ENCODE measurements at regions of chr11 and their contacts with region 1.

Region 1: DNA sequence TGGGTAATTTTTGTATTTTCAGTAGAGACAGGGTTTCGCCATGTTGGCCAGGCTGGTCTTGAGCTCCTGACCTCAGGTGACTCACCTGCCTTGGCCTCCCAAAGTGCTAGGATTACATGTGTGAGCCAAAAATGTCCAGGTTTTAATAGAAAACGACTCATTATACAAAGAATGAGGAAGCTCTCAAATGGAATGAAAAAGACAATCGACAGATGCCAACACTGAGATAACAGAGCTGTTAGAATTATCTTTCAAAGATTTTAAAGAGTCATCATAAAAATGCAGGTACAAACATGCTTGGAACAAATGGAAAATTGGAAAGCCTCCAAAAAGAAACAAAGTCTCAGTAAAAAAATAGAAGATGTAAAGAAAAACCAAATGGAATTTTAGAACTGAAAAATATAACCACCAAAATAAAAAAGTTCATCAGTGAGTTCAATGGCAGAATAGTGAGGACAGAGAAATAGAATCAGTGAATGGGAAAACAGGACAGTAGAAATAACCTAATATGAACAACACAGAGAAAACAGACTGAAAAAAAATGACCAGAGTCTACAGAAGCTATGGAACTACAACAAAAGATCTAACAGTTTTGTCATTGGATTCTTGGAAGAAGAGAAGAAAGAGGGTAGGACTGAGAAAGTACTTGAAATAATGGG is 11.0 kb downstream of the GAB2 start:
- DNase-seq: peak; percentile 65
- ATAC-seq: peak; percentile 46
- H3K4me3 ChIP-seq: no peak overlapping the region
- H3K27ac ChIP-seq: no peak overlapping the region
- H3K4me1 ChIP-seq: peaks cover 8% of the 10 kb centered on the region
- H3K27me3 ChIP-seq: no peaks in the 10 kb centered on the region
- CTCF ChIP-seq: no peak

Region 2: GRCh38 chr11:78370406-78371172 is 36.1 kb before region 1 on chr11:
- CTCF ChIA-PET with region 1: no interaction called
- POLR2A ChIA-PET with region 1: no interaction called
- intact Hi-C with region 1: loop called (anchors 5 kb)
- DNase-seq: no peak
- ATAC-seq: peak; percentile 71
- H3K4me3 ChIP-seq: no peak overlapping the region
- H3K27ac ChIP-seq: no peak overlapping the region
- H3K4me1 ChIP-seq: peaks cover 14% of the 10 kb centered on the region
- H3K27me3 ChIP-seq: no peaks in the 10 kb centered on the region
- CTCF ChIP-seq: no peak

Region 3: GRCh38 chr11:78432058-78432515 is 25.4 kb after region 1 on chr11:
- CTCF ChIA-PET with region 1: no interaction called
- POLR2A ChIA-PET with region 1: no interaction called
- intact Hi-C with region 1: no loop called
- DNase-seq: peak; percentile 37
- ATAC-seq: no peak; the same call in 1 of the 2 replicates
- H3K4me3 ChIP-seq: no peak overlapping the region
- H3K27ac ChIP-seq: no peak overlapping the region
- H3K4me1 ChIP-seq: no peaks in the 10 kb centered on the region
- H3K27me3 ChIP-seq: no peaks in the 10 kb centered on the region
- CTCF ChIP-seq: peak; percentile 67

Region 4: DNA sequence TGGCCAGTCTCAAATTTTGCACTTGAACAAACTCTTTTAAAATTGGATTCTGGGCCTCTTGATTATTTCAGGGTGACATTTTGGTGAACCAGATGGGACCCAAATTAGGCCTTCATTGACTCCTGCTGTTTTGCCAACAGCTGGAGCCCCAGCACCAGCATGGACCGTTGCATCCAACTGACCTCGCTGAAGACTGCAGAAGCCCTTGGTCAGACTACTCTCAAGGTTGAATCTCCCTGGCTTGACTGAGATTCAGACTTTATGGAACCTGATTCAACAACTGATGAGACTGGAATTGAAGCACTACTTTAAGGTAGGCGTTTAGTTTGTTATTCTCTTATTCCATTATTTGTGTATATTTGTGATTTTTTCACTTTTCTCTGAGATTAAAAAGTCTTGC is 126.3 kb after region 1 on chr11:
- CTCF ChIA-PET with region 1: no interaction called
- POLR2A ChIA-PET with region 1: no interaction called
- intact Hi-C with region 1: no loop called
- DNase-seq: no peak
- ATAC-seq: no peak
- H3K4me3 ChIP-seq: no peak overlapping the region
- H3K27ac ChIP-seq: no peak overlapping the region
- H3K4me1 ChIP-seq: no peaks in the 10 kb centered on the region
- H3K27me3 ChIP-seq: no peaks in the 10 kb centered on the region
- CTCF ChIP-seq: no peak